Psoas muscle (tissue), 8 donors: ENCODE measurements at regions of chr11 and their contacts with region 1.

Region 1: GRCh38 chr11:61733120-61733978 is 19.1 kb upstream of the MYRF start:
- DNase-seq: peak; percentile 87 to 93
- ATAC-seq: peak; percentile 87 to 95 (median 91)
- H3K4me3 ChIP-seq: no peak overlapping the region
- H3K27ac ChIP-seq: peak overlapping the region; percentile 78
- H3K4me1 ChIP-seq: peaks cover 22% of the 10 kb centered on the region
- H3K27me3 ChIP-seq: no peaks in the 10 kb centered on the region
- CTCF ChIP-seq: peak; percentile 99

Region 2: DNA sequence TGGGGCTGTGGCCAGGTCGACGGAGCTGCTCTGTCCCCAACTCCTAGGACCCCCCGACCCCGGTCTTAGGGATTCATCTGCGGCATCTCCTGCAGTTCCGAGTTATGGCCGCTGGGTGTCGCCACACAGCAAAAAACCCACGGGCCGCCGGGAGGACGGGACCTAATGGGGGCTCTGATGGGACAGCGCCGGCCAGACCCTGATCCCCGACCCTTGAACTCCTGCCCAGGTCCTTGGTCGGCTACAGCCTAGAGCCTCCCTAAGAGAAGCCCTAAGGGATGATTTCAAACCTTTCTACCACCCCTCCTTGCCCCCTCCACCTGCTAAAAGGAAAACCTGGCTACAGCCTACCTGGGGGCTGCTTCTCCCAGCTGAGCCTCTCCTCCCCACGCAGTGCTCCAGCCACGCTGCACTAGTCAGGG is 255.6 kb before region 1 on chr11:
- intact Hi-C with region 1: loop called in 1 of 2 experiments (anchors 10 kb)
- DNase-seq: peak; percentile 62 to 79
- ATAC-seq: peak; percentile 42 to 64 (median 55)
- H3K4me3 ChIP-seq: no peak overlapping the region
- H3K27ac ChIP-seq: no peak overlapping the region
- H3K4me1 ChIP-seq: peaks cover 11% of the 10 kb centered on the region
- H3K27me3 ChIP-seq: peaks cover 0 to 12% (median 7%) of the 10 kb centered on the region in 3 donors
- CTCF ChIP-seq: peak; percentile 96

Region 3: DNA sequence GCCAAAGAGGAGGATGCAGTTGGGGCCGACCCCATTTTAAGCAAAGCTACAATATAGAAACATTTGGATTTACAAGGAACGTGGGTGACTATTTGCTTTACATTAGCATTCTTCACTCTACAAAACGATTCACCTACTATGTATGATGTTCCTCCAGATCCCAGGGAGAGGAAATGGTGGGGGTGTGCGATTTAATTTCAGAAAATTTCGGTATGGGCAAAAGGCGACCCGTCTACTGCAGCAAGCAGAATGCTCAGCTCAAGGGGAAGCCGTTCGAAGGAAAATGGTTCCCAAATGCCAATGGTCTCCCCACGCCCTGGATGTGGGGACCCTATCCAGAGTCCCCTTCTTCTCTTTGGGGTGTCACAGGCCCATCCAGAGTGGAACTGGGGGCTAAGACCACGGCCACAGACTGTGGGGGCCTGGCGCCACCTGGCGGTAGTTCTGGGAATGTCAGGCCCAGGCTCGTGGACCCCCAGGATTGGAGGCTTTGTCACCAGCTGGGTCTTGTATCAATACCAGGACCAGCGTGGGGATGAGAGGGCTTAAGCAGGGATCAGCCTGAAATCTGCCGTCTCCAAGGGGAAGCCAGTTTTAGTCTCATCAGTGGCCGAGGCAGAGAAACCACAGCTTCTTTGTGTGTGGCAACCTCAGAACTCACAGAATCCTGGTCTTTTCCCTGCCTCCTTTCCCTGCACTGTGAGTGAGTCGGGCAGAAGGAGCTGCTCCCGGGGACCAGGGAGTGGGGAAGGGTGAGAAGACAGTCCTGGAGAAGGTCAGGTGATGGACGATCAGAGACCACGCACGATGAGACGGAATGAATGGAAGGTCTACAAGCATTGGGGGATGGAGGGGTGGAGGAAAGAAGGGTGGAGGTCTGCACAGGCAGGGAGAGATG is 216.4 kb before region 1 on chr11:
- intact Hi-C with region 1: no loop called
- DNase-seq: peak in 1 of 2 donors; percentile 40
- ATAC-seq: peak; percentile 56 to 86 (median 65)
- H3K4me3 ChIP-seq: no peak overlapping the region
- H3K27ac ChIP-seq: no peak overlapping the region
- H3K4me1 ChIP-seq: no peaks in the 10 kb centered on the region
- H3K27me3 ChIP-seq: peaks cover 0 to 5% (median 2%) of the 10 kb centered on the region in 3 donors
- CTCF ChIP-seq: peak; percentile 97

Region 4: GRCh38 chr11:61581030-61581928 is 152.1 kb before region 1 on chr11 and contains the start of gene SYT7:
- intact Hi-C with region 1: loop called in 1 of 2 experiments (anchors 5 kb)
- DNase-seq: peak; percentile 95 to 97
- ATAC-seq: peak; percentile 90 to 94 (median 92)
- H3K4me3 ChIP-seq: peak within 1 kb of the TSS; percentile 66
- H3K27ac ChIP-seq: peak within 1 kb of the TSS; percentile 63
- H3K4me1 ChIP-seq: no peaks in the 10 kb centered on the region
- H3K27me3 ChIP-seq: no peaks in the 10 kb centered on the region
- CTCF ChIP-seq: peak; percentile 40
- total RNA-seq, gene SYT7: 1.9 to 2.8 (median 2.1) TPM

Region 5: DNA sequence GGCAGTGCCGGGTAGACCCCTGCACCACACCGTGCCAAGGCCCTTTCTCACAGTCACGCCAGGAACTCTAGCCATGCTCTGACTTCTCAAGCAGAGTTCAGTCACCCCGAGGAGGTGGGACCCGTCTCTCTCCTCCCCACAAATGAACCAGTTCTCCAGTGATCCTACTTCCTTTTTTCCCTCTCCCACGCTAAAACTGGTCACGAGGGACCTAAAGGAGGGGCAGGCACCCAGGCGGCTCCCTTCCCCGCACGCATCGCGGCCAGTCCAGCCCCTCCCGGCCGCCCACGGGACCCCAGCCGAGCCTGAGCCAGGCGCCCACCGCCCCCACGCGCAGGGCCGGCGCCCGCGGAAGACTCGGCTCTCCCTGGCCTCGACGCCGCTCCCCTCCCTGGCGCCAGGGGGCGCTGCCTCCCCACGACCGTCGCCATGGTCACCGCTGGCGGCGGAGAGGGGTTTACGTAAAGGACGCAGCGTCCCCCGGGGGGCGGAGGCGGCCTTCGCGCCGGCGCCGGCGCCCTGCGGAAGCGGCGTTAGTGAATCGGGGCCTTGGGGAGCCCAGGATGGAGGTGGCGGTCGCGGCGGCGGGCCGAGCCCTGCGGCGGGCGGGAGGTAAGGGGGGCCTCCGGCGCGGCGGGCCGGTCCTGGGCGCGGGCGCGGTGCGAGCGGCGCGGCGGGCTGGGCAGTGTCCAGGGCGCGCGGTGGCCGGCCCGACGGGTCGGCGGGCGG is 53.3 kb before region 1 on chr11 and contains the start of gene DAGLA:
- intact Hi-C with region 1: loop called (anchors 1 to 2 kb)
- DNase-seq: peak; percentile 70 to 82
- ATAC-seq: peak; percentile 68 to 79 (median 70)
- H3K4me3 ChIP-seq: peak within 1 kb of the TSS; percentile 70
- H3K27ac ChIP-seq: peak within 1 kb of the TSS; percentile 79
- H3K4me1 ChIP-seq: peaks cover 28% of the 10 kb centered on the region
- H3K27me3 ChIP-seq: no peaks in the 10 kb centered on the region
- CTCF ChIP-seq: peak; percentile 96
- total RNA-seq, gene DAGLA: 1.9 to 5.1 (median 3.3) TPM